Calu3 (cell line): ENCODE measurements at regions of chr14 and their contacts with region 1.

Region 1: GRCh38 chr14:67934008-67934481 is 114.5 kb downstream of the RAD51B start:
- DNase-seq: peak; percentile 27
- H3K4me3 Mint-ChIP-seq: no peak overlapping the region
- H3K27ac Mint-ChIP-seq: peak overlapping the region; percentile 3
- H3K4me1 Mint-ChIP-seq: peaks cover 9% of the 10 kb centered on the region
- H3K27me3 Mint-ChIP-seq: no peaks in the 10 kb centered on the region
- CTCF ChIP-seq: peak; percentile 67

Region 2: GRCh38 chr14:67919259-67920032 is 14.6 kb before region 1 on chr14:
- CTCF ChIA-PET with region 1: no interaction called
- intact Hi-C with region 1: no loop called
- DNase-seq: no peak
- H3K4me3 Mint-ChIP-seq: no peak overlapping the region
- H3K27ac Mint-ChIP-seq: no peak overlapping the region
- H3K4me1 Mint-ChIP-seq: no peaks in the 10 kb centered on the region
- H3K27me3 Mint-ChIP-seq: no peaks in the 10 kb centered on the region
- CTCF ChIP-seq: no peak

Region 3: GRCh38 chr14:67944605-67945004 is 10.6 kb after region 1 on chr14:
- CTCF ChIA-PET with region 1: no interaction called
- intact Hi-C with region 1: no loop called
- DNase-seq: no peak
- H3K4me3 Mint-ChIP-seq: no peak overlapping the region
- H3K27ac Mint-ChIP-seq: peak overlapping the region; percentile 87
- H3K4me1 Mint-ChIP-seq: peaks cover 41% of the 10 kb centered on the region
- H3K27me3 Mint-ChIP-seq: no peaks in the 10 kb centered on the region
- CTCF ChIP-seq: no peak

Region 4: DNA sequence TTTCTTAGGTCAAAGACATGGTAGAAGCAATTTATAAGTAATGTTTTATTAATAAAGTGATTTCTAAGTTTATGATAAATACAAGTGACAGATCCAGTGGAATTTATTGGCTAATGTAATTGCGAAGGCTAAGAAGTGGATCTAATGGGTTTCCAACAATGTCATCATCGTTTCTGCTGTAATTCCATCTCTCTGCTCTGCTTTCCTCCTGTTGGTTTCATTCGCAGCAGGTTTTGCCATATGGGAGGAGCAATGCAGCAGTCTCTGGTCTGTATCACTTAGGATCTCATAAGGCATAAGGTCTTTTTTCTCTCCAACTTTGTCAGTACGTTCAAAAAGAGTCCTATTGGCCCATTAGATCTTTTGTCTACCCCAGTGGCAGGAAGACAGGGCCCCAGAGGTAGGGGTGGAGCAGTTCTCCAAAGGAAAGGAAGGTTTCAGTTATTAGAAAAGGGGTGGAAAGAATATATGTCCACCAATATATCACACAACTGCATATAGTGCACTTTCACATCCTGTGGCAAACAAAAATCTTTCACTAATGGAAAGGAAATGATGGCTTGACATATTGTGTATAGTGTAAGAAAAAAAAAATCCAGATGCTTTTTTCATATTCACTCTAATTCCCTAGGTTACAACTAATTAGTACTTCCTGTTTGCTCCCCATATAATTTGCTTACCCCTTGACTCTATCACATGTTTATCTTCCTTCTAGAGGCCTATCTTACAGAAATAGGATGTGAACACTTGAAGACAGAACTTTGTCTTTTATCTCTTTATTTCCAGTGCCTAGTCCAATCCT is 407.6 kb after region 1 on chr14:
- CTCF ChIA-PET with region 1: no interaction called
- intact Hi-C with region 1: no loop called
- DNase-seq: no peak
- H3K4me3 Mint-ChIP-seq: no peak overlapping the region
- H3K27ac Mint-ChIP-seq: no peak overlapping the region
- H3K4me1 Mint-ChIP-seq: no peaks in the 10 kb centered on the region
- H3K27me3 Mint-ChIP-seq: no peaks in the 10 kb centered on the region
- CTCF ChIP-seq: no peak

Region 5: DNA sequence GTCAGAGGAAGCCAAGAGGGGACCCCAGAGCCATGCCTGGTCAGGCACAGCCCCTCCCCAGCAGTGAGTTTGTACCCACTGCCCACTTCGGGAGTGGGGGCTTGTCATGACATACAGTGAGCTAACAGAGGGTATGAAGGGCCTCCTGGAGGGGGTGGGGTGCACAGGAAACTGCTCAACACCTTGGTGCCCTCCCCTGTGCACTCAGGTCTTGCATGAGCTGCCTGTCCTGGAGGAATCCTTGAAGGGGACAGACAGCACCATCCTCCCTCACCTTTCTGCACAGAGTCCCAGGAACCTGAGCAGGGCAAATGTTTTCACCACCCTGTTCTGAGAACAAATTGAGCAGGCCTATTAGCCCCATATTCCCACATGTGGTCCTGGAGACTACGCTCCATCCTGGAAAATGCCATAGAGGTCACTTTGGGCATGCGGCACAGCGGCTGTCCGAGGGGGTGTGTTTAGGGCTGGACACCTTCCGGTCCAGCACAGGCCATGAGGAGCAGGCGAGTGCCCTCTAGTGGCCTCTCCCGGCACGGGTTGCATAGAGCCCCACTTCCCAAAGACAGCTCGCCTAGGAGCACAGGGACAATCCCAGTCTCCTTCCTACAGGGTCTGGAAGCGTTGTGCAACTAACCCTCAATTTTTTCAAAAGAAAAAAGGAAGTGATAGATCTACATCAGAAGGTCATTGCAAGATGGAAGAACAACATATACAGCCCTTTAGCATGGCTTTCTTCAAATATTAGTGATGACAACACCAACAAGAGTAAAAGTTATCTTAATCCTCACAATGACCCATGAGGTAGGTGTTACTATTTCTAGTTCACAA is 890.7 kb after region 1 on chr14:
- CTCF ChIA-PET with region 1: interaction called, 7 read pairs
- intact Hi-C with region 1: loop called (anchors 5 kb)
- DNase-seq: peak; percentile 90
- H3K4me3 Mint-ChIP-seq: no peak overlapping the region
- H3K27ac Mint-ChIP-seq: peak overlapping the region; percentile 50
- H3K4me1 Mint-ChIP-seq: peaks cover 14% of the 10 kb centered on the region
- H3K27me3 Mint-ChIP-seq: no peaks in the 10 kb centered on the region
- CTCF ChIP-seq: peak; percentile 41

Region 6: DNA sequence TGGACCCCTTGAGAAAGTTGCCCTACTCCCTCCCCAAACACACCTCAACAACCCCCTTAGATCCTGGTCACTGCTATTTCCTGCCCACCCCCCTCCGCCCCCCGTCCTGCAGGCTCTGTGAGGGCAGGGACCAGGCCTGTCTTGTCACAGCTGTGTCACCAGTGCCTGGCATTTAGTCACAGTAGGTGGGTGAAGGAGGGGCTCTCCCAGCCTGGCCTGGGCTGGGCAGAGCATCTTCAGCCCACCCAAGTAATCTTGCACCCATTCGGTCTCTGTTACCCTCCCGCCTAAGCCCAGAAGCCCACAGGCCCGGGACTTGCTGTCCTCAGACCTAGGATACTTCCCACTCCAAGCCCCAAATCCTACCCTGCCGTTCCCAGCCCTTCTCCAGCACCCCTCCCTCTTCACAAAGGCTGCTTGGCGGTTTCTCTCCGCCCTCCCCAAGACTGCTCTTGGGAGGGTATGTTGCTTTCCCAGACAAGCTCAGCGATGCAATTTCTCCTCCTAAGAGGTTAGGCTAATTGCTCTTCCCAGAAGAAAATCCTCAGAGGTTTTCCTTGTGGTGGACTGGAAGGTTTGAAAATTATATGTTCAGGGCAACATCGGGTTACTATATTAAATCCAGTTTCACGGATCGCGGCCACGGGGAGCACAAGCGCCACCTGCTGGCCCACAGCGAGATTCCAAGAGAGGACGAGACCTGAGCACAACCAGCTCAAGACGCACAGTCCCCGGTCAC is 909.6 kb after region 1 on chr14:
- CTCF ChIA-PET with region 1: no interaction called
- intact Hi-C with region 1: loop called (anchors 5 kb)
- DNase-seq: peak; percentile 75
- H3K4me3 Mint-ChIP-seq: peak overlapping the region; percentile 40
- H3K27ac Mint-ChIP-seq: no peak overlapping the region
- H3K4me1 Mint-ChIP-seq: peaks cover 28% of the 10 kb centered on the region
- H3K27me3 Mint-ChIP-seq: no peaks in the 10 kb centered on the region
- CTCF ChIP-seq: peak; percentile 79